Right cardiac atrium (tissue), 5 donors: ENCODE measurements at regions of chr3 and their contacts with region 1.

Region 1: DNA sequence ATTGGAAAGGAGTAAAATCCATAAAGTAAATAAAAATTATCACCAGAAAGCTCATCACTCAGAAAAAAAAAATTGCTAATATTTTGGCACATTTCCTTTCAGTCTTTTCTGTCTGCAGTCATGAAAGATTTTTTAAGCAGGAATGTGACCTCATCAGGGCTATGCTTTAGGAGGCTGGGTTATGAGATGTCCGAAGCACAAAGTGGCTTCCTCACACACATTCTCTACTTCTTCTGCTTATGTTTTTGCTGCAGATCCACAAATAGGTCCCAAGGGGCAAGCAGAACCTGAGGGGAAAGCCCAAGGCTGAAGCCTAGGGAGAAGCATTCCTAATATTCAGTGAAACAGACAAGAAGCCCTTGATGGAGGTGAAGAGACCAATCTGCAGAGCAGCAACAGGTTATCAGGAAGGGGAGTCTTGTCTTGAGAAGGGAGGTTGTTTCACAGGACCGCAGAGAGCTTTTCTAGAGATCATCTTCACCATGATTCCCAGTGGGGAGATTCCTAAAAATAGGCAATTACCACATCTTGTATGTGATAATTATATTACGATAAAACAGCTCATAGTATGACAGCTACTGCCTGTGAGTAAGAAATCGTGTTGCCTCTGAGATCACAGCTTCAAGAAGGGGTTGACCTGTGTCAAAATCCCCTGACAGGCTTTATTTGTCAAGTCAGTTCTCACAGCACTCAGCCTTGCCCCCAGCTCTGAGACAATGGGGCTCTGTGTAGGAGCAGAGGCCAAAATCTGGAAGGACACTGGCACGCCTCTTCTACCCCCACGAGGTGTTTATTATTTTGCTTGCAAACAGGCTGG is 60.5 kb downstream of the IGF2BP2 start:
- DNase-seq: no peak
- ATAC-seq: peak; percentile 63 to 66
- H3K4me3 ChIP-seq: peak overlapping the region; percentile 12
- H3K27ac ChIP-seq: no peak overlapping the region
- H3K4me1 ChIP-seq: peaks cover 7% of the 10 kb centered on the region
- H3K27me3 ChIP-seq: no peaks in the 10 kb centered on the region

Region 2: DNA sequence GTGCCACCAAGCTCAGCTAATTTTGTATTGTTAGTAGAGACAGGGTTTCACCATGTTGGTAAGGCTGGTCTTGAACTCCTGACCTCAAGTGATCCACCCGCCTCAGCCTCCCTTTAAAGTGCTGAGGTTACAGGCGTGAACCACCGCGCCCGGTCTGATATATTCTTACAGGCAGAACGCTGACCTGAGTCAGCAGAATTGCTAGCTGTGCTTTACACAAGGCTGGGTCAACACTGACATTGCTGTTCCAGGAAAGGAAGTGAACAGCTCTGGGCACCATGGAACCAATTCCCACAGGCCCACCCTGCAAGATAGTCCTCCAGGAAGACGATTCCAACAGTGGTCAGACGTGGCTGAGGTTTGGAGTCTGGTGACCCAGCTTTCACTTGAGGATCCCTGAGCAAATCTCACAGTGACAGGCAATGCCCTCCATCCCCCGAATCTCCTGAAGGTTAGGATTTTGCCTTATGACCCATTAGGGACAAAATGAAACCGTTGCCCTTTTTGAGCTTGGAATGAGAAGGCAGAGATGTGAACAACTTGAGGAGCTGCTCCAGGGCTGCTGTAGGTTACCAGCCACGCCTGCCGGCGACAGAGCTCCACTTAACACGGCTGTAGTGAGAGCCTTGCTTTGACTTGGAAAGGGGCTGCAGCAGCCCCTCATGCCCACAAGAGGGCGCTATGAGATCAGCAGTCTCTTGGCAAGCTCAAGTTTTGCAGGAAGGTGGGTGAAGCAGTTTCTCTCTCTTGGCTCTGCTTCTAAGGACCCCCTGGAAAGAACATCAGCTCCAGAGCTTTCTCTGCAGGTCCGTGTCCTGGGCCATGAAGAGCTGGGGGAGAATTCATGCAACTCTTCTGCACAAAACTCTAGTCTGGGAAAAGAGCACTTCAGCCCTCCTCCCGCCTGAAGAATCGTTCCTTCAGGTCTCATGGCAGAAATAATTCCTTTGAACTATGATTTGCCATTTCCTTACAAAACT is 104.1 kb before region 1 on chr3:
- intact Hi-C with region 1: loop called in 1 of 4 experiments (anchors 10 kb)
- DNase-seq: peak; percentile 65 to 92 (median 86)
- ATAC-seq: peak; percentile 66 to 78
- H3K4me3 ChIP-seq: no peak overlapping the region
- H3K27ac ChIP-seq: peak overlapping the region; percentile 24
- H3K4me1 ChIP-seq: peaks cover 13% of the 10 kb centered on the region
- H3K27me3 ChIP-seq: no peaks in the 10 kb centered on the region

Region 3: DNA sequence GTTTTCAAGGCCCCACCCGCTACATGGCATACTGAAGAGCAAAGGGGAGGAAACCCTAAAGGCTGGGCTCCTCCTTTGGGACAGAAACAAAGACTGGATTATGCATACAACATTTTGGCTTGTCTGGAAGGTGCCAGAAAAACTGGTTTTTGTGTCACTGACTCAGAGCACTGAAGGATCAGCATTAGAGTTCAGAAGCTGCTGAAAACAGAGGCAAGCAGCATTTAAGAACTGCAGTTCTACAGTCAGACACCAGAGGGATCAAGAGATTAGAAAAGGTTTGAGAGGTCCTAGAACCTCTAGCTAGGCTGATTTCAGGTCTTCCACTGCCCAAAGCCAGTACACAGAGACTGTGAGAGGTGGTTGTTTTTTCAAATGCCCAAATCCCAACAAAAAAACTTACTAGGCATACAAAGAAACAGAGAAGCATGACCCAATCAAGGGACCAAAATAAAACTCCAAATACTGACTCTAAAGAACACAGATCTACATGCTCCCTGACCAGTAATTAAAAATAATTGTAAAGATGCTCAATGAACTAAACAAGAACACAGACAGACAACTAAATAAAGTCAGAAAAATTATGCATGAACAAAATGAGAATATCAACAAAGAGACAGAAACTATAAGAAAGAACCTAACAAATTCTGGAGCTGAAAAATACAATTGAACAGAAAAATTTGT is 87.1 kb before region 1 on chr3:
- intact Hi-C with region 1: loop called in 1 of 4 experiments (anchors 5 kb)
- DNase-seq: no peak
- ATAC-seq: peak in 1 of 2 donors; percentile 42
- H3K4me3 ChIP-seq: no peak overlapping the region
- H3K27ac ChIP-seq: no peak overlapping the region
- H3K4me1 ChIP-seq: no peaks in the 10 kb centered on the region
- H3K27me3 ChIP-seq: no peaks in the 10 kb centered on the region